ENCODE measurements at regions of chr19 and their contacts with region 1.

Region 1: GRCh38 chr19:1241417-1242095 is at the start of gene ATP5F1D:
- DNase-seq: peak; percentile 98
- H3K4me3 ChIP-seq: peak within 1 kb of the TSS; percentile 70 to 85 (median 79)
- H3K27ac ChIP-seq: peak within 1 kb of the TSS; percentile 93 to 100 (median 98)
- H3K4me1 ChIP-seq: peaks cover 0 to 80% (median 77%) of the 10 kb centered on the region in 4 donors
- H3K27me3 ChIP-seq: peaks cover 6 to 8% (median 7%) of the 10 kb centered on the region in 3 donors
- CTCF ChIP-seq: no peak
- EP300 ChIP-seq: peak in 1 of 4 donors; percentile 83
- POLR2A ChIP-seq: peak in 1 of 2 donors; percentile 33
- total RNA-seq, gene ATP5F1D: 74.7 to 112 (median 104) TPM

Region 2: DNA sequence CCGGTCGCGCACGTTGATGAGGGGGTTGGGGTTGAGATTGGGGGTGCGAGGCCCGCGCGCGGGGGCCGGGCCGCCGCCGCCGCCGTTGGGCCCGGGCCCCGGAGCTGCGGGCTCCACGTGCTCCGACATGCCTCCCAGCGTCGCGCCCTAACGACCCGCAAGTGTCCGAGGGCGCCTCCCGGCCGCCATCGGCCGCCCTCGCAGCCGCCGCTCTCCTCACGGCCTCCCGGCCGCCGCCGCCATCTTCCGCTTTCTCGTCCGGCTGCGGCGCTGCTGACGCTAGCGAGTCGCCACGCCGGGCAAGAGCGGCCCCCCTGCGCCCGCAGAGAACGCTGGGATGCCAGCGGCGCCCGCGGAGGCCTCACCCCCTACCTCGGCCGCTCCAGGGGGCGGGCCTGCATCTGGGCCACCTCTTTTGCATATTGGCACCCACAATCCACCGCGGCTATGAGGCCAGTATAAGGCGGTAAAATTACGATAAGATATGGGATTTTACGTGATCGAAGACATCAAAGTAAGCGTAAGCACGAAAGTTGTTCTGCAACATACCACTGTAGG is 220.6 kb before region 1 on chr19 and contains the start of gene TMEM259:
- intact Hi-C with region 1: loop called (anchors 2 kb)
- DNase-seq: peak; percentile 99
- H3K4me3 ChIP-seq: peak within 1 kb of the TSS; percentile 66 to 97 (median 84)
- H3K27ac ChIP-seq: peak within 1 kb of the TSS; percentile 92 to 96 (median 94)
- H3K4me1 ChIP-seq: peaks cover 0 to 69% (median 58%) of the 10 kb centered on the region in 4 donors
- H3K27me3 ChIP-seq: no peaks in the 10 kb centered on the region
- CTCF ChIP-seq: no peak
- EP300 ChIP-seq: peak in 1 of 4 donors; percentile 71
- POLR2A ChIP-seq: no peak
- total RNA-seq, gene TMEM259: 85.6 to 174 (median 126) TPM

Region 3: GRCh38 chr19:1113033-1113985 is 128.2 kb before region 1 on chr19:
- intact Hi-C with region 1: loop called (anchors 1 kb)
- DNase-seq: peak; percentile 98
- H3K4me3 ChIP-seq: peak overlapping the region in 2 of 4 donors; percentile 20 to 25
- H3K27ac ChIP-seq: peak overlapping the region; percentile 80 to 85 (median 82)
- H3K4me1 ChIP-seq: peaks cover 0 to 28% (median 27%) of the 10 kb centered on the region in 4 donors
- H3K27me3 ChIP-seq: no peaks in the 10 kb centered on the region
- CTCF ChIP-seq: peak; percentile 94 to 98 (median 95)
- EP300 ChIP-seq: no peak
- POLR2A ChIP-seq: no peak

Region 4: GRCh38 chr19:1221141-1221903 is 20.2 kb before region 1 on chr19:
- intact Hi-C with region 1: loop called (anchors 2 kb)
- DNase-seq: peak; percentile 83
- H3K4me3 ChIP-seq: no peak overlapping the region
- H3K27ac ChIP-seq: peak overlapping the region in 2 of 4 donors; percentile 5 to 57
- H3K4me1 ChIP-seq: peaks cover 0 to 65% (median 50%) of the 10 kb centered on the region in 4 donors
- H3K27me3 ChIP-seq: no peaks in the 10 kb centered on the region
- CTCF ChIP-seq: peak; percentile 9 to 59 (median 49)
- EP300 ChIP-seq: no peak
- POLR2A ChIP-seq: no peak

Region 5: DNA sequence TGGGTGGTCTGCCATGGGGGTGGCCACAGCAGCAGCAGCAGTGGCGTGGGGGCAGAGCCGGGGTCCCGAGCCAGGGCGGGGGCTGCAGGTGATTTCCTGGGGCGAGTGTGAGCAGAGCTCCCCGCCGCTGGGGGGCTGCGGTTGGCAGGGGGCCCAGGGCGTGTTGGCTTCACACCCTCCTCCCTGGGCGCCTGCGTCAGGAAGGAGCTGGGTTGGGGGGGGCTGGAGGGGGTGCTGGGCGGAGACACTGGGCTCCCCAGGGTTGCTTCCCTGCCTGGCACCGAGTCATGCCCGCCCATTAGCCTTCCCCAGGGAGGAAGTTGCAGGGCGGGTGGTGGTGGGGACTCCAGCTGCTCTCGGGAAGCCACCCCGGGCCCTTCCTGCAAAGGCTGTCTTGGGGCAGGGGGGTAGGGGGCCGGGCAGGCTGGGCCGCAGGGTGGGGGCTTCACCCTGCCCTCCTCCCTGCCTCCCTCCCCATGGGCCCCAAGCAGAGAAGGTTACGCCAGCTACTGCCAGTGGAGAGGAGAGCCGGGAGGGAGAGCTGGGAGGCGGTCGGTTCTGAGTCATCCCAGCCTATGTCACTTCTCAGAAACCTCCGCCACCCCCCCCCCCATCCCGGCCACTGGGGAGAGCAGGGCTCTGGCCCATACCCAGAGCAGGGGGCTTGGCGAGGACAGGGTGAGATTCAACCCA is 11.4 kb after region 1 on chr19:
- intact Hi-C with region 1: no loop called
- DNase-seq: peak; percentile 98
- H3K4me3 ChIP-seq: peak overlapping the region; percentile 75 to 96 (median 86)
- H3K27ac ChIP-seq: peak overlapping the region; percentile 96 to 100 (median 100)
- H3K4me1 ChIP-seq: peaks cover 12 to 69% (median 59%) of the 10 kb centered on the region in 4 donors
- H3K27me3 ChIP-seq: no peaks in the 10 kb centered on the region
- CTCF ChIP-seq: peak in 2 of 4 experiments; percentile 23 to 24
- EP300 ChIP-seq: peak in 2 of 4 donors; percentile 17 to 62
- POLR2A ChIP-seq: no peak

Region 6: DNA sequence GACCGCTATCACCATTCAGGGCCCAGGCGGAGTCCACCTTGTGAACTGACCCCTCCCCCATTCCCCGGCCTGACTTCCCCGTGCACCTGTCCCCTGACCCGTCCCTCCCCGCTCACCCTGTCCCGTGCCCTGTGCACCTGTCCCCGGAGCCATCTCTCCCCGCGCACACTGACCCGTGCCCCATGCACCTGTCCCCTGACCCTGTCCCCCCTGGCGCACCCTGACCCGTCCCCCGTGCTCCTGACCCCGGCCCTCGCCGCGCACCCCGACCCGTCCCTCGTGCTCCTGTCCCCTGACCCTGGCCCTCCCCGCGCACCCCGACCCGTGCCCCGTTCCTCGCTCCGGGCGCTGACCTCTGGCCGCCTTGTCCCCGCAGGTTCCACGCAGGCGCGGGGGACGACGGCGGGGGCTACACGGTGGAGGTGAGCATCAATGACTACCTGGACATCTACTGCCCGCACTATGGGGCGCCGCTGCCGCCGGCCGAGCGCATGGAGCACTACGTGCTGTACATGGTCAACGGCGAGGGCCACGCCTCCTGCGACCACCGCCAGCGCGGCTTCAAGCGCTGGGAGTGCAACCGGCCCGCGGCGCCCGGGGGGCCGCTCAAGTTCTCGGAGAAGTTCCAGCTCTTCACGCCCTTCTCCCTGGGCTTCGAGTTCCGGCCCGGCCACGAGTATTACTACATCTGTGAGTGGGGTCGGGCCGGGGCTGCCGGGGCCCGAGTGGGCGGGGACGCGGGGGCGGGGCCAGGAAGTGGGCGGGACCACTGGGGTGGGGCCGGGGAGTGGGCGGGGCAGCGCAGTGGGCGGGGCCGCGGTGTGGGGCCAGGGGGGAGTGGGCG is 53.8 kb after region 1 on chr19:
- intact Hi-C with region 1: no loop called
- DNase-seq: no peak
- H3K4me3 ChIP-seq: peak overlapping the region in 1 of 4 donors; percentile 7
- H3K27ac ChIP-seq: no peak overlapping the region
- H3K4me1 ChIP-seq: peaks cover 0 to 11% (median 8%) of the 10 kb centered on the region in 4 donors
- H3K27me3 ChIP-seq: peaks cover 9 to 61% (median 56%) of the 10 kb centered on the region in 3 donors
- CTCF ChIP-seq: no peak
- EP300 ChIP-seq: no peak
- POLR2A ChIP-seq: no peak

Region 7: DNA sequence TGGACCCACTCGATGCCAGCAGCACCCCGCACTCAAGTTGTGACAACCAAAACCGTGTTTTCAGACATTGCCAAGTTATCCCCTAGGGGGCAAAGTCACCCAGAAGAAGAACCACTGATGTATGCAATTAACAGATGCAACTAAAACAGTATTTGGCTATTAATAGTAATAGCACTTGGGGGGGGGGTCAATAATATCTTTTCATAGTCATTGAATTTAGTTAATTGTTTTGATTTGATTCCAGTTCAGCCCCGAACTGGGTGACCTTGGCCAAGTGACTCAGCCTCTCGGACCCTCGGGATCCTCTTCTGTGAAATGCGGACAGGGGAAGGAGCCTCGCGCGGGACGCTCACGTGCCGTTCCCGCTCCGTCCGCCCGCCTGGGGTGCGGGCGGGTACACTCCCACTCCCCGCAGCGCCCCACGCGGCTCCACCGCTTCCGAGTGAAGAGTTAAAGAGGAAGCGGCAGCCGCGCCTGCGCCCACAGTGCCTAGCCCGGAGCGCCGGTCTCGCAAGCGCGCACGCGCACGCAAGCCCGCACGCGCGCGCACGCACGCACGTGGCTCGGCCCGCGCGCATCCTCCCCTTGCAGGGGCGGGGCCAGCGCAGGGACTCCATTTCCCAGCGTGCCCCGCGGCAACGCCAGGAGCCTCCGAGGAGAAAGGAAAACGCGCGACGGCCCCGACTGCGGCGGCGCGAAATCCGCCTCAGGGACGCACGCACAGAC is 165.4 kb after region 1 on chr19:
- intact Hi-C with region 1: no loop called
- DNase-seq: peak; percentile 99
- H3K4me3 ChIP-seq: peak overlapping the region; percentile 37 to 99 (median 93)
- H3K27ac ChIP-seq: peak overlapping the region; percentile 79 to 98 (median 92)
- H3K4me1 ChIP-seq: peaks cover 4 to 41% (median 39%) of the 10 kb centered on the region in 4 donors
- H3K27me3 ChIP-seq: peaks cover 0 to 9% (median 0%) of the 10 kb centered on the region in 3 donors
- CTCF ChIP-seq: peak in 3 of 4 experiments; percentile 6 to 45 (median 26)
- EP300 ChIP-seq: peak in 1 of 4 donors; percentile 37
- POLR2A ChIP-seq: no peak